Activated CD4-positive, alpha-beta T cell treated with anti-CD3 and anti-CD28 coated beads for 36 hours (primary cell): ENCODE measurements at regions of chr2 and their contacts with region 1.

Region 1: GRCh38 chr2:53422979-53423378 is 344.6 kb upstream of the CHAC2 start:
- DNase-seq: peak; percentile 36
- ATAC-seq: no peak
- H3K4me3 Mint-ChIP-seq: no peak overlapping the region
- H3K27ac Mint-ChIP-seq: no peak overlapping the region
- H3K4me1 Mint-ChIP-seq: no peaks in the 10 kb centered on the region
- H3K27me3 Mint-ChIP-seq: peaks cover 2% of the 10 kb centered on the region

Region 2: DNA sequence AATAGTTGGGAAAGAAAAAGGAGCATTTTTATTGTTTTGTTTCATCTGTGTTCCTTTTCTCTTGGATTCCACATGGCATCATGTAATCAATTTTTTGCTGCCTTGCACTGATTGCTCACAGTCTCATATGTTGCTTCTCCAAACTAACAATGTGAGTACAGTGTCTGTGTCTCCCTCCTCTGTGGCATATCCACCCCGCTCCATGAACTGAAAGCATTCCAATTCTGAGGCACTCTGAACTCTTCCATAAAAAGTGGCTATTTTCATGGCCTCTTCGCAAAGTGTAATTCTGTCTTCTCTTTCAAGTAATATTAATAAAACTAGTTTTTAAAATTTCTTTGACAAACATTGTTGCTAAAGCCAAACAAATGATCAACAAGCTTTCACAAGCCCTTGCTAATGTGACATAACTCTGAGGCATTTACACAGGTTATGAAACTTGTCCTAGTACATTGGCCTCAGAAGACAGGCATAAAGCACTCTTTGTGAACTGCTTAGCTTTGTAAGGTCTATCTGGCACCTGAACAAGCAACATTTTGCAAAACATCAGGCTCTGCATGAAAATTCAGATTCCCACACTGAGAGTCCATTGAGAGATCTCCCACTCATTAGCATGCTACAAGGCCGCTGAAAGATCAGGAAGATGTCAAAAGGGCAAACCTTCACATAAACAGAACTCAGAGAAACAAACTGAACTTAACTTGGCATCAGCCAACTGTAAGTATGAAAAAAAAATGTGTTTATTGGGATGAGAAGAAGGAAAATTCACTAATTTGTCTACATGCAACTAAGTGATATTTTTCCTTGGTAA is 403.8 kb after region 1 on chr2:
- CTCF ChIA-PET with region 1: no interaction called
- POLR2A ChIA-PET with region 1: no interaction called
- intact Hi-C with region 1: loop called in 1 of 2 experiments (anchors 1 kb)
- DNase-seq: no peak
- ATAC-seq: no peak
- H3K4me3 Mint-ChIP-seq: no peak overlapping the region
- H3K27ac Mint-ChIP-seq: no peak overlapping the region
- H3K4me1 Mint-ChIP-seq: no peaks in the 10 kb centered on the region
- H3K27me3 Mint-ChIP-seq: no peaks in the 10 kb centered on the region